GM12878 (cell line): ENCODE measurements at regions of chr16 and their contacts with region 1.

Region 1: GRCh38 chr16:71746442-71747046 is 22.0 kb upstream of the PHLPP2 start:
- DNase-seq: no peak
- ATAC-seq: peak; percentile 71
- H3K4me3 ChIP-seq: no peak overlapping the region
- H3K27ac ChIP-seq: no peak overlapping the region
- H3K4me1 ChIP-seq: no peaks in the 10 kb centered on the region
- H3K27me3 ChIP-seq: no peaks in the 10 kb centered on the region
- CTCF ChIP-seq: peak; percentile 48 to 63 (median 52)
- EP300 ChIP-seq: no peak
- POLR2A ChIP-seq: no peak
- RAD21 ChIP-seq: peak; percentile 69

Region 2: DNA sequence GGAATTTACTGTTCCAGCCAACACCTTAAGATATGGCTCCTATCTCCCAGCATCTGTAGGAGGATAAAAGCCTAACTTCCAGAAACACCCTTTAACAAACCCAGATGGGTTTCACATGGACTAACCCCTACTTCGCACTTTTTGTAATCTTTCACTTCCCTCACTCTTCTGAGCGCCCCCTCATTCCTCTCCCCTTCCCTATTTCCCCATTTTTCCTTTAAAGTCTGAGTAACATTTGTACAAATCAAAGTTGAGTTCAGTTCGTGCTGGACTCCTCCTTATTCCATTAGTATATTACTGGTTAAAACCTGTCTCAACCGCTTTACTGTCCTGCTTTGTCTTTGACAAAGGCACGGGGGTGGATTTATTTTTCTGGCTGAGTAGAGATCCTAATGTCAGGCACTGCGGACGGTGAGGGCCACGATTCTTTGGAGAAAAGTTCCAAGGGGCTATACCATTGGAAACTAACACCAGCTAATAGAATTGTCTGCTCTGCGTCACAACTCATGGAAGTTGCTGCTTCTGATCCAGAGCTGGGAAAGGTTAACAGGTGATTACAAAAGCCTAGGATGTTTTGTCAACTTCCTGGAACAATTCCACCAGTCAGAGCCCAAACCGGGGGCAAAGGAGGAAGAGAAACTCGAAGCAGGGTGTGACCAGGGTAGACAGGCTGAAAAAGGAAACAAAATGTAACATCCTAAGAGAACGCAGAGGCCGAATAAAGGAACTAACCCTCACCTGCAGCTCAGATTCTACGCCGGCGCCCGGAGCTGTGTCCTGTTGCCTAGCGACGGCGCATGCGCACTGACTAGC is 182.2 kb before region 1 on chr16:
- CTCF ChIA-PET with region 1: interaction called, 4 read pairs
- POLR2A ChIA-PET with region 1: interaction called, 5 read pairs
- RAD21 ChIA-PET with region 1: interaction called, 3 read pairs
- SMC1A ChIA-PET with region 1: no interaction called
- in situ Hi-C with region 1: no loop called
- intact Hi-C with region 1: loop called (anchors 2 kb)
- DNase-seq: no peak
- ATAC-seq: peak; percentile 1; the same call in 2 of the 3 replicates
- H3K4me3 ChIP-seq: peak overlapping the region; percentile 76
- H3K27ac ChIP-seq: peak overlapping the region; percentile 91
- H3K4me1 ChIP-seq: peaks cover 3% of the 10 kb centered on the region; the same call in 1 of the 2 replicates
- H3K27me3 ChIP-seq: no peaks in the 10 kb centered on the region
- CTCF ChIP-seq: no peak
- EP300 ChIP-seq: no peak
- POLR2A ChIP-seq: no peak
- RAD21 ChIP-seq: no peak